ENCODE measurements at regions of chr12 and their contacts with region 1.

Region 1: GRCh38 chr12:39990122-39991101 is 115.5 kb downstream of the SLC2A13 start:
- DNase-seq: peak in 1 of 2 experiments; percentile 27
- H3K4me3 ChIP-seq: no peak overlapping the region
- H3K27ac ChIP-seq: no peak overlapping the region
- H3K4me1 ChIP-seq: no peaks in the 10 kb centered on the region
- H3K27me3 ChIP-seq: no peaks in the 10 kb centered on the region
- CTCF ChIP-seq: peak; percentile 86

Region 2: GRCh38 chr12:39764944-39765560 is 225.4 kb before region 1 on chr12:
- CTCF ChIA-PET with region 1: interaction called, 3 read pairs
- POLR2A ChIA-PET with region 1: no interaction called
- intact Hi-C with region 1: loop called (anchors 1 kb)
- DNase-seq: no peak
- H3K4me3 ChIP-seq: no peak overlapping the region
- H3K27ac ChIP-seq: no peak overlapping the region
- H3K4me1 ChIP-seq: no peaks in the 10 kb centered on the region
- H3K27me3 ChIP-seq: no peaks in the 10 kb centered on the region
- CTCF ChIP-seq: peak; percentile 90

Region 3: DNA sequence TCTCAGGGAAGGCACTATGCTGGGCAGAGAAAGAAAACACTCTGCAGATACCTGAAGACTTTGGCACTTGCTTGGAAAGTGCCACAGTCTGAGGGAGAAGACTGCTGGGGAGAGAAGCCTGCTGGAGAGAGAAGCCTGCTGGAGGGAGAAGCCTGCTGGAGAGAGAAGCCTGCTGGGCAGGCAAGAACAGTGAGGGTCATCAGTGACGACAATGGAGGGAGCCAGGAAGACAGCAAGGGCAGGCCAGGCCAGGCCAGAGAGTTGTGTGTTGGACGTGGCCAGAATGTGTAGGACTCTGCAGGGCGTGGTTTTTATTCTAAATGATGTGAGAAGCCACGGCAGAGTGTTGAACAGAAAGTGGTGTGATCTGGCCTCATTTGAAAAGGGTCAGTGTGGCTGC is 185.5 kb before region 1 on chr12:
- CTCF ChIA-PET with region 1: no interaction called
- POLR2A ChIA-PET with region 1: no interaction called
- intact Hi-C with region 1: no loop called
- DNase-seq: no peak
- H3K4me3 ChIP-seq: no peak overlapping the region
- H3K27ac ChIP-seq: no peak overlapping the region
- H3K4me1 ChIP-seq: no peaks in the 10 kb centered on the region
- H3K27me3 ChIP-seq: no peaks in the 10 kb centered on the region
- CTCF ChIP-seq: no peak

Region 4: DNA sequence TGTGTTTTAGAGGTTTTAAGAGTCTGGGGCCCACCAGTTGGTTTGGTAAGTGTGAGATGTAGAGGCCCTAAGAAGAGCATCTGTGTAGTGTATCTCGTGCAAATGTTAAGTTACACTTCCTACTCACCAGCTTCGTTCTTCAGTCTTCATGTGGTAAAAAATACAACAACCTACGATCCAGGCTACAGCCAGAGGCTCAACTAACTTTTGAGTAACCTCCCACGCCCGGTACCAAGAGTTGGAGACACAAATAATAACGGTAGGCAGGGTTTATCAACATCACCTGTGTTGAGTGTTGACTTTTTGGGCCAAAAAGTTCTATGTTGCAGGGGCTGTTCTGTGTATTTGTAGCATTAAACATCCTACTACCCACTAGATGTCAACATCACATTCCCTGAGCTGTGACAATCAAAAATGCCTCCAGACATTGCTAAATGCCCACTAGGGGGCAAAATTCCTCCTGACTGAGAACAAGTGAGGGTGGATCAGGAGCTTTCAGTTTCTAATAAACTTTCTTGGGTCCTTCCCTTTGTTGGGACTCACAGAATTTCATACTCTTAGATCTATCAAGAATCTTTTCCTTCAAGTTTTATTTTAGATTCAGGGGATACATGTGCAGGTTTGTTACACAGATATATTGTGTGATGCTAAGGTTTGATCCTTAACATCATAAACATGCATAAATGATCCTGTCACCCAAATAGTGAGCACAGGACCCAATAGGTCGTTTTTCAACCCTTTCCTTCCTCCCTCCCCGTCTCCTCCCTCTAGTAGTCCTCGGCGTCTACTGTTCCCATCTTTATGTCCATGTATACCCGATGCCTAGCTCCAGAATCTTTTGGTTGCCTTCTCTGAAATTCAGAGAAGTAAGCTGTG is 20.7 kb after region 1 on chr12:
- CTCF ChIA-PET with region 1: no interaction called
- POLR2A ChIA-PET with region 1: no interaction called
- intact Hi-C with region 1: no loop called
- DNase-seq: peak; percentile 17 to 41
- H3K4me3 ChIP-seq: no peak overlapping the region
- H3K27ac ChIP-seq: no peak overlapping the region
- H3K4me1 ChIP-seq: no peaks in the 10 kb centered on the region
- H3K27me3 ChIP-seq: no peaks in the 10 kb centered on the region
- CTCF ChIP-seq: peak; percentile 82

Measured in PC-9 (cell line).